Kidney (tissue), 22 donors: ENCODE measurements at regions of chr2 and their contacts with region 1.

Region 1: DNA sequence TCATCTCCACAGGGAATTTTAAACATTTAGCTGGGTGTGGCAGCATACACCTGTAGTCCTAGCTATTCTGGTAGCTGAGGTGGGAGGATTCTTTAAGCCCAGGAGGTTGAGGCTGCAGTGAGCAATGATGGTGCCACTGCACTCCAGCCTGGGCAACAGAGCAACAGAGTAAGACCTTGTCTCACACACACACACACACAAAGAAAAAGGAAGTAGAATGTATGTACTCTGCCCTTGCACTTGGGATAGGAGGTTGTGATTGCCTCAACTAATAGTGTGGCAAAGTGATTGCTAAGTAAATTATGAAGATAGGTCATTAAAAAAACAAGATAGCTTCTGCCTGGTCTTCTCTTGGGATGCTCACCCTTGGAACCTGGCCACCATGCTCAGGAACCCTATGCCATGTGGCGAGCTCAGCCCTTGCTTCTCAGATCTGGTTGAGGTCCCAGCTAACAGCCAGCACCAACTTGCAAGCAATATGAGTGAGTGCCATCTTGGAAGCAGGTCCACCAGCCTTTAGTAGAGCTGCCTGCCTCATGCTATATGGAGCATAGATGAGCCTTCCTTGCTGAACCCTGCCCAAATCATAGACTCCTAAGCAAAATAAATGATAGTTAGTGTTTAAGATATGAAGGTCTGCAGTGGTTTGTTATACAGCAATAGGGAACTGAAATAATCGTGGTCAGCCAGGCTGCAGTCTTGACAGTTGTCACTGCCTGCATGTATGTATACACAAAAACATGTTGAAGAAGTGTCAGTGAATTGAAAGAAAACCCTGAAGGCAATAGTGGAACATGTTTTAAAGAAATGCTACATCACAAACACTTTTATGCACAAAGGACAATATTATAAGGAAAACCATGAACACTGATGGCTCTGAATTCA is 30.1 kb upstream of the PNO1 start:
- DNase-seq: no peak
- H3K4me3 ChIP-seq: no peak overlapping the region
- H3K27ac ChIP-seq: no peak overlapping the region
- H3K4me1 ChIP-seq: no peaks in the 10 kb centered on the region
- H3K27me3 ChIP-seq: no peaks in the 10 kb centered on the region
- CTCF ChIP-seq: no peak

Region 2: DNA sequence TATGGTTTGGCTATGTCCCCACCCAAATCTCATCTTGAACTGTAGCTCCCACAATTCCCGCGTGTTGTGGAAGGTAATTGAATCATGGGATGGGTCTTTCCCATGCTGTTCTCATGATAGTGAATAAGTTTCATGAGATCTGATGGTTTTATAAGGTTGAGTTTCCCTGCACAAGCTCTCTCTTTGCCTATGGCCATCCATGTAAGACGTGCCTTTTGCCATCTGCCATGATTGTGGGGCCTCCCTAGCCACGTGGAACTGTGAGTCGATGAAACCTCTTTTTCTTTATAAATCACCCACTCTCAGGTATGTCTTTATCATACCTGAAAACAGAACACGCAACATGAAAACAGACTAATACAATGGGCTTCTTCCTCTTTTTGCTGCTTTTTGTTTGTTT is 53.5 kb before region 1 on chr2:
- intact Hi-C with region 1: no loop called
- DNase-seq: no peak
- H3K4me3 ChIP-seq: no peak overlapping the region
- H3K27ac ChIP-seq: no peak overlapping the region
- H3K4me1 ChIP-seq: no peaks in the 10 kb centered on the region
- H3K27me3 ChIP-seq: no peaks in the 10 kb centered on the region
- CTCF ChIP-seq: no peak

Region 3: DNA sequence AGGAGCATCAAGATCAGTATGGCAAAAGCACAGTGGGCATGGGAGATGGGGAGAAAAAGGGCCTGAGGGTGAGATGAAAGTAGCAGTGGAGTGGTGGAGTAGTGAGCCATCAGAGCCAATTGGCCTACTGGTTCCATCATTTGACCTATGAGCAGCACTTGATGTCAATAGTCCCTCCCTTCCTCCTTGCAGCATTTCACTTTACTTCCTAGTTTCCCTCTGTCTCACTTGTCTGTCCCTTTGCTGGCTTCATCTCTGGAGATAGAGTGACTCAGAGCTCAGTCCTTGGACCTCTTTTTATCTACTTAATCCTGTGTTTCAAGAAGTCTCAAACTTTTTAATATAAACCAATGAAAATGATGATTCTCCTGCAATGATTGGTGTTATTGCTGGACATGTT is 307.4 kb after region 1 on chr2:
- intact Hi-C with region 1: loop called (anchors 5 kb)
- DNase-seq: no peak
- H3K4me3 ChIP-seq: no peak overlapping the region
- H3K27ac ChIP-seq: no peak overlapping the region
- H3K4me1 ChIP-seq: peaks cover 0 to 4% (median 0%) of the 10 kb centered on the region in 3 donors
- H3K27me3 ChIP-seq: no peaks in the 10 kb centered on the region
- CTCF ChIP-seq: no peak